Calu3 (cell line): ENCODE measurements at regions of chrX and their contacts with region 1.

Region 1: DNA sequence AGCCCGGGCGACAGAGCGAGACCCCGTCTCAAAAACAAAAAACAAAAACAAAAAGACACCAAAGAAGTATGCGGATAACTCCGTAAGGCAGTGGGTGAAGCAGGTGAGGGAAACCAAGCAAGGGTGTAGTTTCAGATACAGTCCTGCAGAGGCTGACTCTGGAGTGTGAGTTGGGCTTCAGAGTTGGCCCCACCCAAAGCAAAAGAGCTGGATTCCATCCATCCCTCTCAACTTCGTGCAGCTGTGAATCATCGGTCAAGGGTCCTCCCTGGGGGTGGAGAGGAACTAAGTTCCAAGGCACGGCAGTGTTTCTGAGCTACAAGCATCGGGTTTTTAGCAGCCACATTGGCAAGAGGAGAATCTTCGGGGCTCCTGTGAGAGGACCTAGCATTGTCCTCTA is 43.9 kb upstream of the FAM9A start:
- DNase-seq: peak; percentile 72
- H3K4me3 Mint-ChIP-seq: peak overlapping the region; percentile 9
- H3K27ac Mint-ChIP-seq: peak overlapping the region; percentile 73
- H3K4me1 Mint-ChIP-seq: peaks cover 40% of the 10 kb centered on the region
- H3K27me3 Mint-ChIP-seq: no peaks in the 10 kb centered on the region
- CTCF ChIP-seq: peak; percentile 30

Region 2: DNA sequence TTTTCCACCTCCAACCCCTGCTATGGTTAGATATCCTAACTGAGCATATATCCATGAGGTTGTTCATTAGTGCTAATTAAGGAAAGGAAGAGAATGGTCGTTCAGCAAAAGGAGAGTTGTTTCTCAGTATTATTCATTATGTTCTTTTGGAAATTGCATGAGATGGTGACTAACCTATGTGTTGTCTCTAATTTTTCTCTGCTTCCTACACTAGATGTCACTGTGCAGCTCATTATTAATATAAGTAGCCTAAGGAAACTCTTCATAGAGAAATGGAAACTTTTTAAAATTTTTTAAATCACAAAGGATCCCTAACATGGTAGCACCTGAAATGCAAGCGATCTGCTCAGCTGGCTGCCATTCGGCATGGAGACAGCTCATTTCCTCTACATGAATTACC is 23.8 kb after region 1 on chrX:
- CTCF ChIA-PET with region 1: interaction called, 6 read pairs
- intact Hi-C with region 1: loop called (anchors 2 kb)
- DNase-seq: no peak
- H3K4me3 Mint-ChIP-seq: no peak overlapping the region
- H3K27ac Mint-ChIP-seq: peak overlapping the region; percentile 79
- H3K4me1 Mint-ChIP-seq: peaks cover 20% of the 10 kb centered on the region
- H3K27me3 Mint-ChIP-seq: no peaks in the 10 kb centered on the region
- CTCF ChIP-seq: no peak

Region 3: DNA sequence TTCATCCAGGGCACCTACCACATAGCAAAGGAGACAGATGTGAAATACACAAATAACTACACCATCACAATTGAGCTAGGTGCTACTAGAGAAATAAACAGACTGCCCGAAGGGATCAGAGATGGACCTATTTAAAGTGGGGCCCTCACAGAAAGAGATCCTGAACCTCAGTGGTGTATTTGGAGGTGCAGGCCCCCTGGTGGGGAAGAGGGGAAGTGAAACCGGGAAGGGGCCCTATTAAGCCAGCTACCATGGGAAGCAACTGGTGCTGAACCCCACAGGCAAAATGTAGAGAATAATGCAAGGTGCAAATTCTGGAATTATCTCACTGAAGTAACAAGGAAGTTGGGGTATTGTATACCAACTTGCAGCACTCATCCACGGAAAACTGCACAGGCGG is 34.7 kb after region 1 on chrX:
- CTCF ChIA-PET with region 1: interaction called, 10 read pairs
- intact Hi-C with region 1: no loop called
- DNase-seq: peak; percentile 63
- H3K4me3 Mint-ChIP-seq: no peak overlapping the region
- H3K27ac Mint-ChIP-seq: no peak overlapping the region
- H3K4me1 Mint-ChIP-seq: no peaks in the 10 kb centered on the region
- H3K27me3 Mint-ChIP-seq: no peaks in the 10 kb centered on the region
- CTCF ChIP-seq: peak; percentile 60

Region 4: DNA sequence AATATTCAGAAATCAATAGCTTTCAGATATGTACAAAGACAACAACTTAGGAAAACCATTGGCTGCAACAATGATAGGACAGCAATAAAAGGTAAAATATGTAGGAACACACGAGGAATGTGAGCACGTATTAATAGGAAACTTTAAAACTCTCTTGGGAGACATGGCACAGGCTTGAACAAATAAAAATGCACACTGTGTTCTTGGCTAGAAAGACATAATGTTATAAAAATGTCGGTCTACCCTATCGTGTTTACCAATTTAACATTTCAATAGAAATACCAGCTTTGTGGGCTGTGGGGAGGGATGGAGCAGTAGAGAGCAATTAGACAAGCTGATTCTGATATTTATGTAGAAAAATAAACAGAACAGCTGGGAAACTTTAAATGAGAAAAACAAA is 257.9 kb after region 1 on chrX:
- CTCF ChIA-PET with region 1: interaction called, 11 read pairs
- intact Hi-C with region 1: no loop called
- DNase-seq: no peak
- H3K4me3 Mint-ChIP-seq: no peak overlapping the region
- H3K27ac Mint-ChIP-seq: no peak overlapping the region
- H3K4me1 Mint-ChIP-seq: no peaks in the 10 kb centered on the region
- H3K27me3 Mint-ChIP-seq: no peaks in the 10 kb centered on the region
- CTCF ChIP-seq: no peak

Region 5: DNA sequence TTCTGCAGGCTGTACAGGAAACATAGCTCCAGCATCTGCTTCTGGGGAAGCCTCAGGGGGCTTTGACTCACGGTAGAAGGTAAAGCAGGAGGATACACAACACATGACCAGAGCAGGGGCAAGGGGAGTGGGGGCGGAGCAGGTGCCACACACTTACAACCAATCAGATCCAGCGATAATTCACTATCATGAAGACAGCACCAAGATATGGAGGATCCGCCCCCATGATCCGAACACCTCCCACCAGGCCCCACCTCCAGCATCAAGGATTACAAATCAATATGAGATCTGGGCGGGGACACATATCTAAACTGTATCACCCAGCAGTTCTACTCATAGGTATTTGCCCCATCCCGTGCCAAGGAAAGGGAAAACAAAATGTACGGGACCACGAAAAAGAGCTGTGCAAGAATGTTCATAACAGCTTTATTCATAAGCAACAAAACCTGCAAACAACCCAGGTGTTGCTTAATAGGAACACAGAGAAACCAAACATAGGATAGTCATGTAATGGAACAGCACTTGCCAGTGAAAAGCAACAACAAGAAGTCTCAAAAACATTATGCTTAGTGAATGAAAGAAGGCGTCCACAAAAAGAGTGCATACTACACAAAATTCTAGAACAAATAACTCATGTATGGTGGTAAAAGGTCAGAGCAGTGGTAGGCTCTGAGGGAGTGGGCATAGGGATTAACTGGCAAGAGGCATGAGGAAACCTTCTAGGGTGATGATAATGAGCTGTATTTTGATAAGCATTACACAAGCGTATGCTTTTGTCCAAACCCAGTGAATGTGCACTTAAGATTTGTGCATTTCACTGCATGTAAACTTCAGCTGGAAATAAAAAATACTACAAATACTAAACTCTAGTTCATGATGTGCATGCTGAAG is 319.7 kb after region 1 on chrX:
- CTCF ChIA-PET with region 1: interaction called, 3 read pairs
- intact Hi-C with region 1: loop called (anchors 5 kb)
- DNase-seq: peak; percentile 72
- H3K4me3 Mint-ChIP-seq: peak overlapping the region; percentile 56
- H3K27ac Mint-ChIP-seq: peak overlapping the region; percentile 95
- H3K4me1 Mint-ChIP-seq: peaks cover 44% of the 10 kb centered on the region
- H3K27me3 Mint-ChIP-seq: no peaks in the 10 kb centered on the region
- CTCF ChIP-seq: no peak

Region 6: GRCh38 chrX:9352694-9353411 is 507.8 kb after region 1 on chrX:
- CTCF ChIA-PET with region 1: no interaction called
- intact Hi-C with region 1: loop called (anchors 10 kb)
- DNase-seq: no peak
- H3K4me3 Mint-ChIP-seq: peak overlapping the region; percentile 15
- H3K27ac Mint-ChIP-seq: peak overlapping the region; percentile 93
- H3K4me1 Mint-ChIP-seq: peaks cover 29% of the 10 kb centered on the region
- H3K27me3 Mint-ChIP-seq: no peaks in the 10 kb centered on the region
- CTCF ChIP-seq: no peak

Region 7: DNA sequence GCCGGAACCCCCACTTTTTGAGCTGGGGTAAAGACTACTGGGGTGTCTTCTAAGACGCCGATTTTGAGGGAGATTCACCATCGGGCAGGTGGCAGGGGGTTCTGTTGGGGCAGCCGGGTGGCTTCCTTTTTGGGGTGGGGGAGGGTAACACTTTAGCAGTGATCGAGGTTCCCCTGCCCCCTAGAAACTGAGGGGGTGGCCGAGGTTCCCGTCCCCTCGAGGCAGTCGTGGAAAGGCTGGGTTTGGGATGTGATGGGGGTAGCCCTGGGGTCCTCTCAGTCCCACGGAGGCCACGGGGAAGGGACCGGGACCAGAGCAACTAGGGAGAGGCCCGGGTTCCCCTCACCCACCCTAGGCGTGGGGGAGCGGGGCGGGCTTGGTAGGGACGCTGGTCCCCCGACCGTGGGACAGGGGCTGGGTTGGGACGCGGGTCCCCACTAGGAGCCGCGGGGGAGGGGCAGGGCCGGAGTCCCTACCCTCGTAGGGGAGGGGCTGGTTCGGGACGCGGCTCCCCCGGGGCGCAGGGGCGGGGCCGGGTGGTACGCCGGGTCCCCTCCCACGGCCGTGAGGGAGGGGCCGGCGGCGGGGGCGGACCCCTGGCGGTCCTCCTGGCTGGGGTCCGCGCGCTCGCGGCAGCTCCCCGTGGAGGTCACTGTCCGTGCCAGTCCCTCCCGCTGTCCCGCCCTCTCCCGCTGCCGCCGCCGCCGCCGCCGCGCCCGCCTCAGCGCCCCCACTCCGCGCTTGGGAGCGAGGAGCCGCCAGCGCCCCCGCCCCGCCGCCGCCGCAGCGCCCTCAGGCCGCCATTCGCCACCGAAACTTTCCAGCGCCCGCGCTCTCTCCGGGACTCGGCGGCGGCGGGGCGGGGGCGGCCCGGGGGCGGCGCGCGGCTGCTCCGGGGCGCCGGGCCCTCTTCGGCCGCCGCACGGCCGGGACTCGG is 619.6 kb after region 1 on chrX and contains the start of gene TBL1X:
- CTCF ChIA-PET with region 1: no interaction called
- intact Hi-C with region 1: loop called (anchors 10 kb)
- DNase-seq: peak; percentile 74
- H3K4me3 Mint-ChIP-seq: peak within 1 kb of the TSS; percentile 67
- H3K27ac Mint-ChIP-seq: peak within 1 kb of the TSS; percentile 96
- H3K4me1 Mint-ChIP-seq: peaks cover 33% of the 10 kb centered on the region
- H3K27me3 Mint-ChIP-seq: no peaks in the 10 kb centered on the region
- CTCF ChIP-seq: no peak
- total RNA-seq, gene TBL1X: 24.9 and 25.0 TPM in 2 replicates